ENCODE measurements at regions of chr17 and their contacts with region 1.

Region 1: GRCh38 chr17:65294179-65294720 is 157.1 kb downstream of the RGS9 start:
- H3K4me3 ChIP-seq: no peak overlapping the region
- H3K27ac ChIP-seq: no peak overlapping the region
- H3K4me1 ChIP-seq: no peaks in the 10 kb centered on the region
- CTCF ChIP-seq: peak; percentile 68

Region 2: DNA sequence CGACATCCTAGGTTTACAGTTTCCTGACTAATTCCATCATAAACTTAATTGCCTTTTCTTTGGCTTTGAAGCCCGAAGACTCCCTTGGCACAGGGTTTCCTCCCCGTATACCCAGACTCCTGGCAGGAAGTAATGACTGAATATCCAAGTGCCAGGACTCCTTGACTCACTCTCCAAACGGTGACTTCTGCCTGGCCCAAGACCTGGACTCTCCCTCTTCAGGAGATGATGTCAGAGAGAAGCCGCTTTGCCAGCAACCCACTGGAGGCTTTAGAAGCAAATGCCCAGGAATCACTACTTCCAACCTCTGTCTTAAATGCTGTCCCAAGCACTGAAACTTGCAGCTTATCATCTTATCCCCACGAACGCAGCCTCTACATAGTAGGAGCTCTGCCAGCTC is 10.5 kb before region 1 on chr17:
- CTCF ChIA-PET with region 1: interaction called, 16 read pairs
- POLR2A ChIA-PET with region 1: no interaction called
- H3K4me3 ChIP-seq: no peak overlapping the region
- H3K27ac ChIP-seq: no peak overlapping the region
- H3K4me1 ChIP-seq: no peaks in the 10 kb centered on the region
- CTCF ChIP-seq: no peak

Region 3: DNA sequence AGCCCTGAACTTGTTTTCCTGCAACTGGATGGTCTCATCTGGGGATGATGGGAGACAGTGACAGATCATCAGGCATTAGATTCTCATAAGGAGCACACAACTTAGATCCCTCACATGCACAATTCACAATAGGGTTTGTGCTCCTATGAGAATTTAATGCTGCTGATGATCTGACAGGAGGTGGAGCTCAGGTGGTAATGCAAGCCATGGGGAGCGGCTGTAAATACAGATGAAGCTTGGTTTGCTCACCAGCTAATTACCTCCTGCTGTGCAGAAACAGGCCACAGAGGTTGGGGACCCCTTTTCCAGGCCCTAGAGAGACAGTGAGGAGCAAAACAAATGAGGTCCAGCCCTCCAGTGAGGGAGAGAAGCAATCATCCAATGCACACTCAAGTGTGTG is 11.5 kb after region 1 on chr17:
- CTCF ChIA-PET with region 1: interaction called, 10 read pairs
- POLR2A ChIA-PET with region 1: no interaction called
- H3K4me3 ChIP-seq: no peak overlapping the region
- H3K27ac ChIP-seq: no peak overlapping the region
- H3K4me1 ChIP-seq: no peaks in the 10 kb centered on the region
- CTCF ChIP-seq: no peak

Region 4: GRCh38 chr17:65336707-65337106 is 42.5 kb after region 1 on chr17:
- CTCF ChIA-PET with region 1: no interaction called
- POLR2A ChIA-PET with region 1: no interaction called
- H3K4me3 ChIP-seq: no peak overlapping the region
- H3K27ac ChIP-seq: no peak overlapping the region
- H3K4me1 ChIP-seq: 0 out of 2 replicates have a peak, but pooled peaks cover 2% of the 10 kb centered on the region
- CTCF ChIP-seq: no peak

Region 5: DNA sequence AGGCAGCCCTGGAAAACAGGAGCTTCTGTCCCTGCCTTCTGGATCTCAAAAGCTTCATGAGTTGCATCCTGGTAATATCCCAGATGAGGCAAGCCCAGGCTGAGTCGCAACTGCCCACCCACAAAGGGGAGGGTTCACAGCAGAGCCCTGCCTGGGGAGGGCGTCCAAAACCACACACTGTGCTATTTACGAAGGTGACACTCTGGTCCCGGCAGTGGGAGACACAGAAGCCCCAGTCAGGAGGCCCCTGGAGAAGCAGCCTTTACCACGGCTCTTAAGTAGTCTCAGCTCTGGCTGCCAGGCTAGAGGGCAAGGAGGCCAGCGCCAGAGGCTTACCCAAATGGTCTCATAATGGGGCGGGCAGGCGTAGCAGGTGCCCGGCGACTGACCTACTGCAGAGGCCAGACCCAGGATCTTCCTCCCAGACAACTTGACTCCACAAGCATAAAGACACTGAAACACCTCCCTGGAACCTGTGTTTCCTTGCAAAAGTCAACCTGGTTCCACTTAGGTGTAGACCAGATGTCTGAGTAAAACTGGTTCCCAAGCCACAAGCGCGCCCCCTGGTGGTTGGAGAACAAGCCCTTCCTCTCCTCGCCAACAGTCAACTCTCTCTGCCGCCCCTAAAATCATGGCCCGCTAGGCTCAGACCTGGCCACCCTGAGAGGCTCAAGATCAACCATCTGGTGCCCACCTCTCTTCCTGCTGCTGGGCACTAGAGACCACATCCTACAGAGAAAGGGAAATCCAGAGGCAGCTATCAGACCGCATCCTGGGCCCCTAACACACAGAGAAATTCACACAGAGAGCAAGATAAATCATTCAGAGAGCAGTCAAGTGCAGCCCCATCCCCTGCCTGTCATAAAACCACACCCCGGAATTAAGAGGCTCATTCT is 262.0 kb after region 1 on chr17:
- CTCF ChIA-PET with region 1: interaction called, 46 read pairs
- POLR2A ChIA-PET with region 1: no interaction called
- H3K4me3 ChIP-seq: no peak overlapping the region
- H3K27ac ChIP-seq: no peak overlapping the region
- H3K4me1 ChIP-seq: peaks cover 23% of the 10 kb centered on the region
- CTCF ChIP-seq: peak; percentile 86

Region 6: DNA sequence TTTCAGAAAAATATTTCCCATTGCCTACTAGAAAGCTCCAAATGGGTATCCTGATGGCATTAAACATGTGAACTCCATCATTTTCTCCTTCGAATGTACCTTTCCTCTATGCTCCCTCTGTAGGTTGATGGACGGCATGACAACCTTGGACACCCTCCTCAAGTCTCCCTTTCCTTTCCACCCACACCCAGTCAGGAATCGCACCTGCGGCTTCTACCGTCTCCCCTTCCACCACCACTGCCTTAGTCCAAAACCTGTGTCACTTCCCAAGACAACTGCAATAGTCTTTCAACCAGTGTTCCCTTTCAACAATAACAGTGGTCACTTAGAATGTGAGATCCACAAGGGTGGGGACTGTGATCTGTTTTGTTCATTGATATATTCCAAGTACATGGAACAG is 500.3 kb after region 1 on chr17:
- CTCF ChIA-PET with region 1: interaction called, 25 read pairs
- POLR2A ChIA-PET with region 1: no interaction called
- H3K4me3 ChIP-seq: no peak overlapping the region
- H3K27ac ChIP-seq: no peak overlapping the region
- H3K4me1 ChIP-seq: no peaks in the 10 kb centered on the region
- CTCF ChIP-seq: no peak

Region 7: GRCh38 chr17:66165513-66166123 is 871.4 kb after region 1 on chr17:
- CTCF ChIA-PET with region 1: interaction called, 20 read pairs
- POLR2A ChIA-PET with region 1: no interaction called
- H3K4me3 ChIP-seq: no peak overlapping the region
- H3K27ac ChIP-seq: no peak overlapping the region
- H3K4me1 ChIP-seq: no peaks in the 10 kb centered on the region
- CTCF ChIP-seq: 0 out of 2 replicates have a peak, but pooled peaks have one; percentile 13